Activated naive CD8-positive, alpha-beta T cell treated with anti-CD3 and anti-CD28 coated beads, Interleukin-2, amount 10 ng/mL, durations not matched to agents 7 days and 5 days (primary cell): ENCODE measurements at regions of chr10 and their contacts with region 1.

Region 1: DNA sequence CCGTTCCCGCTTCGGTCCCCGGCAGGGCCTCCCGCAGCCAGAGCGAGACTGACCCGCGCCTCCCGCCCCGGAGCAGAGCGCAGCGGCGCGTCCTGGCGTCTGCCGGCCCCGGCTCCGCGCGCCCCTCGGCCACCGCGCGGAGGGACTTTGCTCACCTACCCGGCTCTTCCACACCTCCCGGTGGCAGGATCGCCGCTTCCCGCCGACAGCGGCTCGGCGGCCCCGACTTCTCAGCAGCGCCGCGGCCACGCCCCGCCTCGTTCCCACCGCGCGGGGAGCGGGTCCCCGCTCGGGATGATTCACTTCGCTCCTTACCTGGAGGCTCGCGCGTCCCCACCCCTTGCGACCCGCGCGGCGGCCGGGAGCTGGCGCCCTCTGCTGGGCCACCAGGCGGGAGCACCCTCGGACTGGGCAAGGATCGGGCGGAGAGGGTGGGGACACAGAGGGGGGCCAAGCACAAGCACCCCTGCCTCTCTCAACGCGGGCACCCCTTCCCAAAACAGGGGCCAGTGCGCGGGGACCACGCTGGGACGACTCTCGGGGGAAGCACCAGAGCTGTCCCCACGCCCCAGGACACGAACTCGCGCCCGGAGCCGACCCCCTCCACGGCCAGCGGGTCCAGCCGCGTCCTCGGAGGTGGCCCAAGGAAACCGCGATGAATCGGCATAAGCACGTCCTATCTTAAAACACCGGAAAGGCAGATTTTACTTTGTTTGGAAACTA is 101.0 kb upstream of the SVIL start:
- DNase-seq: peak; percentile 92
- ATAC-seq: peak; percentile 88
- H3K4me3 Mint-ChIP-seq: peak overlapping the region; percentile 83
- H3K27ac Mint-ChIP-seq: peak overlapping the region; percentile 77
- H3K4me1 Mint-ChIP-seq: peaks cover 13% of the 10 kb centered on the region
- H3K27me3 Mint-ChIP-seq: peaks cover 40% of the 10 kb centered on the region

Region 2: DNA sequence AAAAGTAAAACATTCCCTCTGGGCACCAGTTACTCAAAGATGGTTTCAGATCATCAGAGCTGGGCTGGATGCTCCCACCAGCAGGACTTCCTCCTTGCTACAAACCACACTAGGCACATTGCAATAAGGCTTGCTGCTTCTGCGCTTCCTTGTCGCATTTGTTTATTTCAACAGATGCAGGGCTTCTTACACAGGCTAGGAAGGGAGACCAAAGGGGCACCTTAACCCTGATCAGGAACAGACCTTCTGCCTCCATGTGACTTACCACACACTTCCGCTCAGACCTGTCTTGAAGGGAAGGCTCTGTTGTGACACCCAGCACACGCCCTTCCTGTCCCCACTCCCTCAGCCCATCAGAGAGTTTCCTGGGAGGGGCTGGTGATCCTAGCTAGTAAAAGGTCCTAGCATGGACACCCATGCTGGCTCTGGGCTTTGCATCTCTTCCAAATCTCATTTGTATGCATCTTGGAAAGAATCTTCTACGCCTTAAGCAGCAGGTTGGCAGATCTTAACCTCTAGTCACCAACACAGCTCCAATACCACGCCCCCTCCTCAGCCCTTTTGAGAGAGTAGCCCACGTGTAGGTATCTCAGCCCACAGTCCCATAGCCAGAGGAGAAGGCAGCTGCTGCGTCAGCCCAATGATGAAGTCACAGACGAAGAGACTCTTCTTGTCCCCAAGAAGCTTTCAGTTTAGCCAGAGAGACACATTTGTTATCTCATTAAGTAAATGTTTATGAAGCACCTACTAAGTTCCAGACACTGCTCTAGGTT is 53.9 kb before region 1 on chr10:
- POLR2A ChIA-PET with region 1: interaction called, 11 read pairs
- DNase-seq: peak; percentile 55
- ATAC-seq: peak; percentile 100
- H3K4me3 Mint-ChIP-seq: peak overlapping the region; percentile 59
- H3K27ac Mint-ChIP-seq: peak overlapping the region; percentile 89
- H3K4me1 Mint-ChIP-seq: peaks cover 28% of the 10 kb centered on the region
- H3K27me3 Mint-ChIP-seq: no peaks in the 10 kb centered on the region

Region 3: DNA sequence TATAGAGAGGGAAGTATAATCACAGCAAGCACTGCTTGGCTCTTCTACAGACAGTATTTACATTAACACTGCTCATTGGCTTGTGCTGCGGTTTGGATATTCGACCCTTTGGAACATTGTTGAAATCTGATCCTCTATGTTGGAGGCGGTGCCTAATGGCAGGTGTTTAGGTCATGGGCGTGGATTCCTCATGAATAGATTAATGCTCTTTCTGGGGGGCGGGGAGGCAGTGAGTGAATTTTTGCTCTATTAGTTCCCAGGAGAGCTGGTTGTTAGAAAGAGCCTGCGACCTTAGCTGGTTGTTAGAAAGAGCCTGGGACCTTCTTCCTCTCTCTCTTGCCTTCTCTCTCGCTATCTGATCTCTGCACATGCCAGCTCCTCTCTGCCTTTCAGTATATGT is 23.6 kb before region 1 on chr10:
- POLR2A ChIA-PET with region 1: no interaction called
- DNase-seq: no peak
- ATAC-seq: no peak
- H3K4me3 Mint-ChIP-seq: no peak overlapping the region
- H3K27ac Mint-ChIP-seq: no peak overlapping the region
- H3K4me1 Mint-ChIP-seq: no peaks in the 10 kb centered on the region
- H3K27me3 Mint-ChIP-seq: no peaks in the 10 kb centered on the region

Region 4: GRCh38 chr10:29757551-29758297 is 22.0 kb after region 1 on chr10:
- POLR2A ChIA-PET with region 1: no interaction called
- DNase-seq: no peak
- ATAC-seq: no peak
- H3K4me3 Mint-ChIP-seq: no peak overlapping the region
- H3K27ac Mint-ChIP-seq: no peak overlapping the region
- H3K4me1 Mint-ChIP-seq: no peaks in the 10 kb centered on the region
- H3K27me3 Mint-ChIP-seq: peaks cover 7% of the 10 kb centered on the region